AG04450 (cell line): ENCODE measurements at regions of chr22 and their contacts with region 1.

Region 1: GRCh38 chr22:31211862-31212730 is at the start of gene LIMK2:
- DNase-seq: peak; percentile 29
- H3K4me3 ChIP-seq: peak within 1 kb of the TSS; percentile 88
- H3K27ac ChIP-seq: no peak within 1 kb of the TSS
- H3K27me3 ChIP-seq: no peaks in the 10 kb centered on the region
- CTCF ChIP-seq: peak; percentile 80
- polyA plus RNA-seq, gene LIMK2: 5.0 and 9.0 TPM in 2 replicates

Region 2: DNA sequence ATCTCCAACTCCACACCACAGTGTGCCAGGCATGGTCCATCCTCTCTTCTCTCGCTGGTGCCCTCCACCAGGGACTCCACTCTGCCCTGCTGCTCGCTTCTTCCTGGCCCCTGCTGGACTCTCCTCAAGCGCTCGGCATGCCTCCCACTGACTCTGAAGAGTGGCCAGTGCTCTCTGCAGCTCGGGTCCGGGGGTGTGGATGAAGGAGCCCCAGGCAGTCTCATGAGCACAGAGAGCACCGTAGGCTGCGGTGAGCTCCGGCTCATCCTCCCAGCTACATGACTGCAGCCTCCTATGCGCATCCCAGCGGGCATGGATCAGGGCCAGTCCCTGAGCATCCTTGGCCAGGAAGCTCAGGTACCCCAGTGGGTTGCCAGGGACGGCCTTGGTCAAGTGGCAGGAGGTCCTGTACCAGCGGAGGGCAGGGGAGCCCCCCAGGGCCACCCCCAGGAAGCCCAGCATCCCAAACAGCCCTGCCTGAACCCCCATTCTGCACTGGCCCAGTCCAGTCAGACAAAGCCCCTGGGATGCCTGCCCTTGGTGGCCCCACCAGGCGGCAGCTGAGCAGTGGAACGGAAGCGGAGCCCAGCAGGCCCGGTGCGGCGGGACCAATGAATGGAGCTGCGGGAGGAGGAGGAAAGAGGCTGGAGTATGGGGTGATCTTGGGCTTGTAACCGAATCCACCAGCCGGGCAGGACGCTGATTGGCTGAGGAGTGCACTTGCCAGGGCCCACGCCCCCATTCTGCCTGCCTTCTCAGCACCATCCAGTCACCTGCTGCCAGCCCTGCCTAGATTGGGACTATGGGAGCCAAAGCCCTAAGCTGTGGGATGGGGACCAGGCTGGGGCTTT is 72.0 kb before region 1 on chr22 and contains the start of gene PLA2G3:
- CTCF ChIA-PET with region 1: no interaction called
- POLR2A ChIA-PET with region 1: no interaction called
- DNase-seq: no peak
- H3K4me3 ChIP-seq: no peak within 1 kb of the TSS
- H3K27ac ChIP-seq: no peak within 1 kb of the TSS
- H3K27me3 ChIP-seq: peaks cover 27% of the 10 kb centered on the region
- CTCF ChIP-seq: peak; percentile 26; the same call in 1 of the 2 replicates
- polyA plus RNA-seq, gene PLA2G3: 0.10 and 0.11 TPM in 2 replicates

Region 3: DNA sequence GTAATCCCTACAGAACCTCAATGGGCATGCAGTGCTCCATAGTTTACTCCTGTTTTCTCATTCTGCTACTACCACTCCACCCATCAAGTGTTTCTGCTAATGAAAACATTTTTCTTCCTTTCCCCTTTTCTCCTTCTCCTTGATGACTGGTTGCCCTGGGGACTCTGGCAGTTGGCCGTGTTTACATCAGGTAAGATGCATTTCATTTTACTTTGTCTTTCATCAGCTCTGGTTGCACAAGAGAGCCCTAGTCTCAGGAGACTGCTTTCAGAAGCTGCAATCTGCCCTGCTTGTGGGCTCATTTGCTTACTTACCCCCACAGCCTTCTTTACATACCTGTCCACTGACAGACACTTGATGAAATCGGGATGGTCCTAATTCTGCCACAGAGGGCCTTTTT is 19.6 kb before region 1 on chr22:
- CTCF ChIA-PET with region 1: interaction called, 17 read pairs
- POLR2A ChIA-PET with region 1: no interaction called
- DNase-seq: peak; percentile 21
- H3K4me3 ChIP-seq: no peak overlapping the region
- H3K27ac ChIP-seq: peak overlapping the region; percentile 43
- H3K27me3 ChIP-seq: no peaks in the 10 kb centered on the region
- CTCF ChIP-seq: no peak

Region 4: GRCh38 chr22:31223786-31224191 is 11.7 kb after region 1 on chr22:
- CTCF ChIA-PET with region 1: interaction called, 30 read pairs
- POLR2A ChIA-PET with region 1: interaction called, 3 read pairs
- DNase-seq: no peak
- H3K4me3 ChIP-seq: no peak overlapping the region
- H3K27ac ChIP-seq: no peak overlapping the region
- H3K27me3 ChIP-seq: no peaks in the 10 kb centered on the region
- CTCF ChIP-seq: no peak

Region 5: DNA sequence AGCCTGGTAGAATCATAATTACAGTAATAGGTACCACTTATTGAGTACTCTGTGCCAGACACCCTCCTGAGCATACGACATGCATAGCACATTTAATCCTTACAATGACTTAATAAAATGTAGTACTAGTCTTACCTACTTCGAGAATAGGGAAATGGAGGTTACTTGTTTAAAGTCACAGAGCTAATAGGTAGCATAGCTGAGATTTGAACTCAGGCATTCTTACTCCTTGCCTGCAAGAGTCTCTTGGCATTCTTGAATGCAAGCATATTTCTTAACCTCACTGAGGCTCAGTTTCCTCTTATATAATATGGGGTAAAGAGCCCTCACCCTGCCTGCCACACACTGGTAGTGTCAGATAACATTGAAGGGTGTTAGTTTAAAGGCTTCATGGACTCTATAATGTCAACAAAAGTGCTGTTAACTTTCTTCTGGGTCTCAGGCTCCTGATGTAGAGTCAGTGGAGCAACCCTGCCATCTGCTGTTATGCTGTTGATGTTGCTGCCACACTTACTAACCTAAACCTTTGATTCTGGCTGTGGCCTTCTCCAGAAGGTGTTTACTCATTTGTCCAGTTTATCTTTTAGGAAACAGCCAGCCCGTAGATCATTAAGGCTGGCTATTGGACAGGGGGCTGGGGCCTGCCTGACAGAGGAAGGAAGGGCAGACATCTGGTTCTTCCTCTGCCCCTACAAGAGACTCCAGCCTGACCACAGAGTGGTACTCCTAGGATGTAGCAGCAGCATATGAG is 18.9 kb after region 1 on chr22:
- CTCF ChIA-PET with region 1: interaction called, 53 read pairs
- POLR2A ChIA-PET with region 1: interaction called, 3 read pairs
- DNase-seq: peak; percentile 53
- H3K4me3 ChIP-seq: no peak overlapping the region
- H3K27ac ChIP-seq: no peak overlapping the region
- H3K27me3 ChIP-seq: no peaks in the 10 kb centered on the region
- CTCF ChIP-seq: peak; percentile 87

Region 6: GRCh38 chr22:31248138-31248745 is 36.1 kb after region 1 on chr22:
- CTCF ChIA-PET with region 1: interaction called, 24 read pairs
- POLR2A ChIA-PET with region 1: no interaction called
- DNase-seq: peak; percentile 80
- H3K4me3 ChIP-seq: peak overlapping the region; percentile 74
- H3K27ac ChIP-seq: peak overlapping the region; percentile 61
- H3K27me3 ChIP-seq: no peaks in the 10 kb centered on the region
- CTCF ChIP-seq: no peak

Region 7: DNA sequence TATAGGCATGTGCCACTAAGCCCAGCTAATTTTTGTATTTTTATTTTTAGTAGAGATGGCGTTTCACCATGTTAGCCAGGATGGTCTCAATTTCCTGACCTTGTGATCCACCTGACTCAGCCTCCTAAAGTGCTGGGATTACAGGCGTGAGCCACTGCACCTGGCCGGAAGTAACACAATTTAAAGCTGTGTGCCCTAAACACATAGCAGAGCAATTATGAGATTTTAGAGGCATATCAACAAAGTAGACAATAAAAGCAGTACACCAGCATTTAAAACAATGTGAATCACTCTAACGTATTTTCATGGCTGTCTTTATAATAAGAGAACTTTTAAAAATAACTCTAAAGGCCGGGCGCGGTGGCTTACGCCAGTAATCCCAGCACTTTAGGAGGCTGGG is 495.4 kb after region 1 on chr22:
- CTCF ChIA-PET with region 1: no interaction called
- POLR2A ChIA-PET with region 1: no interaction called
- DNase-seq: no peak
- H3K4me3 ChIP-seq: no peak overlapping the region
- H3K27ac ChIP-seq: no peak overlapping the region
- H3K27me3 ChIP-seq: no peaks in the 10 kb centered on the region
- CTCF ChIP-seq: no peak